CD4-positive, alpha-beta T cell (primary cell): ENCODE measurements at regions of chr7 and their contacts with region 1.

Region 1: DNA sequence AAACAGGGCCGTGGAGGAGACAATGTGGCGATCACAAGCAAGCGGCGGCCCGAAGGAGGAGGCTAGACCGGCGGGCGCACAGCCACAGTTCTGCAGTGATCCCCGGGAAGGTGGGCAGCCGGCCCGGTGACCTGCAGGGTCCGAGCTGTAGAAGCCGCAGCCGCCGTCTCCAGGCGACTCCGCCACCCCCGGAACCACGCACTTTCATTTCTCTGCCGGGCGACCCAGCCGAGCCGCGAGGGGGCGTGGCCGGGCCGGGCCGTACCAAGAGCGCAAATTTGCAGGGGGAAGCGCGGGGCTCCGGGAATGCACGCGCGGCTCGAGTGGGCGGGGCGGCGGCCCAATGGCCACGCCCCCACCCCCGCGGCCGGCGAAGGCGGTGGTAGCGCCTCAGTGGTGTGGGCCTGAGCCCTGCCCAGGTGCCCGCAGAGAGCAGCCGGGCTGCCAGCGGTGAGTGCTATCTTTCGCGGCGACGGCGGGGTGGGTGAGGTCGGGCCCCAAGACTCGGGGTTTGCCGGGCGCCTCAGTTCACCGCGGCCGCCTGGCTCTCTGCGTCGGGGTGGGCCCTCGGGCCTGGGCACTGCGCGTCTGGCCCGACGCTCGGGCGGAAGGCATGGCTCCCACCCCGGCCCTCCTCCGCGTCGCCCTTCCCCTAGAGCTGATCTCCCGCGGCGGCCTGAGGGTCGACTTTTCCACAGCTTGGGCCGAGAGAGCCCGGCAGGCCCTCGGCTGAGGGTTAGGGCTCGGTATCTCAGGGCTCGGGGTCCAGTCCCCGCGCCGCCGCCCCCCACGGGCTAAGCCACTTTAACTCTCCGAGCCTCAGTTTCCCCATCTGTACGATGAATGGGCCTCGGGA is at the start of gene POR:
- DNase-seq: peak; percentile 92 to 99 (median 97)
- ATAC-seq: peak; percentile 94
- H3K4me3 ChIP-seq: peak within 1 kb of the TSS; percentile 99
- H3K4me3 Mint-ChIP-seq: peak within 1 kb of the TSS; percentile 95
- H3K27ac ChIP-seq: peak within 1 kb of the TSS; percentile 90 to 91
- H3K27ac Mint-ChIP-seq: peak within 1 kb of the TSS; percentile 98
- H3K4me1 ChIP-seq: peaks cover 54% of the 10 kb centered on the region
- H3K4me1 Mint-ChIP-seq: peaks cover 48% of the 10 kb centered on the region
- H3K27me3 ChIP-seq: no peaks in the 10 kb centered on the region
- H3K27me3 Mint-ChIP-seq: no peaks in the 10 kb centered on the region
- CTCF ChIP-seq: no peak
- total RNA-seq, gene POR: 44.2 to 54.8 TPM

Region 2: GRCh38 chr7:75878769-75879611 is 36.0 kb before region 1 on chr7 and contains the start of gene RHBDD2:
- CTCF ChIA-PET with region 1: interaction called, 3 read pairs
- POLR2A ChIA-PET with region 1: interaction called, 46 read pairs
- intact Hi-C with region 1: loop called (anchors 1 kb)
- DNase-seq: peak; percentile 95 to 99 (median 97)
- ATAC-seq: peak; percentile 87
- H3K4me3 ChIP-seq: peak within 1 kb of the TSS; percentile 96
- H3K4me3 Mint-ChIP-seq: peak within 1 kb of the TSS; percentile 92
- H3K27ac ChIP-seq: peak within 1 kb of the TSS; percentile 85 to 90
- H3K27ac Mint-ChIP-seq: peak within 1 kb of the TSS; percentile 90
- H3K4me1 ChIP-seq: peaks cover 31% of the 10 kb centered on the region
- H3K4me1 Mint-ChIP-seq: peaks cover 24% of the 10 kb centered on the region
- H3K27me3 ChIP-seq: no peaks in the 10 kb centered on the region
- H3K27me3 Mint-ChIP-seq: no peaks in the 10 kb centered on the region
- CTCF ChIP-seq: no peak
- total RNA-seq, gene RHBDD2: 199 to 208 TPM

Region 3: DNA sequence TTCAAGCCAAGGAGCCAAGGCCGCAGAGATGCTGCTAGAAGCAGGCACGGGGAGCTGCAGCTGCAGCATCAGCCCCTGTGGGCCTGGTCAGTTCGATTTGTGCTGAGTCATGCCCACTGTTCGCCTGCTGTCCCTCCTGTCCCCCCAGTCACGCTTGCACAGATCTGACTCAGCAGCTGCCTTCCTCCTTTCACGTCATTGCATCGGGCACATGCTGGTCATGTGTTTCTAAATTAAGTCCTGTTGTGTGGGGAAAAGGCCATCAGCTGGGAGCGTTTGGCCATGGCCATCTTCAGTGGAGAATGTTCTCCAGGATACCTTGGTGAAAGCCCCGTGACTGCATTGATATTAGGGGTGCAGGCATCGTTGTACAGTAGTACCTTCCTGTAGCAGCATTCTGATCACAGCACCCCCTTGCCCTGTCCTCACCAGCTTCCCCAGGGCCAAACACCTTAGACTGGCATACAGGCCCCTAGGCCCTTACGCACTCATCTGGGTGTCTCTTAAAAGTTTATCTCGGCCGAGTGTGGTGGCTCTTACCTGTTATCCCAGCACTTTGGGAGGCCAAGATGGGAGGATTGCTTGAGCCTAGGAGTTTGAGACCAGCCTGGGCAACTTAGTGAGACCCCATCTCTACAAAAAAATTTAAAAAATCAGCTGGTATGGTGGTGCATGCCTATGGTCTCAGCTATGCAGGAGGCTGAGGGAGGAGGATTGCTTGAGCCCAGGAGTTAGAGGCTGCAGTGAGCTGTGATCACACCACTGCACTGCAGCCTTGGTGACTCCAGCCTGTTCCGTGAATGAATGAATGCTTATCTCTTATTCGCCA is 23.2 kb after region 1 on chr7:
- CTCF ChIA-PET with region 1: no interaction called
- POLR2A ChIA-PET with region 1: no interaction called
- intact Hi-C with region 1: no loop called
- DNase-seq: peak in 2 of 14 experiments; percentile 30 to 39
- ATAC-seq: no peak
- H3K4me3 ChIP-seq: no peak overlapping the region
- H3K4me3 Mint-ChIP-seq: no peak overlapping the region
- H3K27ac ChIP-seq: no peak overlapping the region
- H3K27ac Mint-ChIP-seq: no peak overlapping the region
- H3K4me1 ChIP-seq: no peaks in the 10 kb centered on the region
- H3K4me1 Mint-ChIP-seq: no peaks in the 10 kb centered on the region
- H3K27me3 ChIP-seq: no peaks in the 10 kb centered on the region
- H3K27me3 Mint-ChIP-seq: no peaks in the 10 kb centered on the region
- CTCF ChIP-seq: no peak

Region 4: DNA sequence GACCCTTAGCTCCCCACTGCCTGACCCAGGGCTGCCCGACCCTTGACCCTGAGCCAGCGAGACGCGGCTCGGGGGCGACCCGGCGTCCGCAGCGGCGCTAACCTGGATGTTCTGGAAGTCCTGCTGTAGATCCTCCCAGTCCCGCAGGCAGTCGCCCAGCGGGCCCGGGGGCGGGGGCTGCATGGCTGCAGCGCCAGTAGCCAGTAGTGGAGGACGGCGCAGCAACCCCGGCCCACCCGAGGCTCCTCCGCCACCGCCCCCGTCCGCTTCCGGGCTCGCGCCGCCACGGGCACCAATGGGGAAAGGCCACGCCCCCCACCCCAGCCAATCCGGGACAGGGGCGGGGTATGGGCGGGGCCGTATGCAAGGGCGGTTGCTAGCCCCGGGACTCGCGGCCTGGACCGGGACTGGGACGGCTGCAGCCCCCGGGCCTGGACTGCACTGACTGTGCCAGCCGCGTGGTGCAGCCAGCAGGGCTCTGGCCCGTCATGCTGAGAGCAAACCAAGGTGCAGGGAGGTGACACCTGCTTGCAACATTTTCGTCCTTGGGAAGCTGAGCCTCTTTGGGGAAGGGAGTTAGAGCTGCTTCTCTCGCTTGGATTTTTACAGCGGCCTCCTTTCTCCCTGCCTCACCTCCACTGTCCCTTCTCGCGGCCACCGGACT is 79.6 kb after region 1 on chr7 and contains the start of gene TMEM120A:
- CTCF ChIA-PET with region 1: no interaction called
- POLR2A ChIA-PET with region 1: interaction called, 30 read pairs
- intact Hi-C with region 1: loop called in 1 of 2 experiments (anchors 2 kb)
- DNase-seq: peak; percentile 88 to 98 (median 93)
- ATAC-seq: peak; percentile 98
- H3K4me3 ChIP-seq: peak within 1 kb of the TSS; percentile 94
- H3K4me3 Mint-ChIP-seq: peak within 1 kb of the TSS; percentile 73
- H3K27ac ChIP-seq: peak within 1 kb of the TSS in 1 of 2 donors; percentile 21
- H3K27ac Mint-ChIP-seq: no peak within 1 kb of the TSS
- H3K4me1 ChIP-seq: peaks cover 28% of the 10 kb centered on the region
- H3K4me1 Mint-ChIP-seq: peaks cover 38% of the 10 kb centered on the region
- H3K27me3 ChIP-seq: no peaks in the 10 kb centered on the region
- H3K27me3 Mint-ChIP-seq: no peaks in the 10 kb centered on the region
- CTCF ChIP-seq: peak; percentile 30
- total RNA-seq, gene TMEM120A: 10.0 to 10.8 TPM

Region 5: GRCh38 chr7:76020031-76020714 is 105.2 kb after region 1 on chr7:
- CTCF ChIA-PET with region 1: interaction called, 5 read pairs
- POLR2A ChIA-PET with region 1: interaction called, 10 read pairs
- intact Hi-C with region 1: no loop called
- DNase-seq: peak; percentile 42 to 86 (median 66)
- ATAC-seq: peak; percentile 64
- H3K4me3 ChIP-seq: no peak overlapping the region
- H3K4me3 Mint-ChIP-seq: no peak overlapping the region
- H3K27ac ChIP-seq: no peak overlapping the region
- H3K27ac Mint-ChIP-seq: no peak overlapping the region
- H3K4me1 ChIP-seq: peaks cover 11% of the 10 kb centered on the region
- H3K4me1 Mint-ChIP-seq: peaks cover 6% of the 10 kb centered on the region
- H3K27me3 ChIP-seq: no peaks in the 10 kb centered on the region
- H3K27me3 Mint-ChIP-seq: no peaks in the 10 kb centered on the region
- CTCF ChIP-seq: peak; percentile 88

Region 6: DNA sequence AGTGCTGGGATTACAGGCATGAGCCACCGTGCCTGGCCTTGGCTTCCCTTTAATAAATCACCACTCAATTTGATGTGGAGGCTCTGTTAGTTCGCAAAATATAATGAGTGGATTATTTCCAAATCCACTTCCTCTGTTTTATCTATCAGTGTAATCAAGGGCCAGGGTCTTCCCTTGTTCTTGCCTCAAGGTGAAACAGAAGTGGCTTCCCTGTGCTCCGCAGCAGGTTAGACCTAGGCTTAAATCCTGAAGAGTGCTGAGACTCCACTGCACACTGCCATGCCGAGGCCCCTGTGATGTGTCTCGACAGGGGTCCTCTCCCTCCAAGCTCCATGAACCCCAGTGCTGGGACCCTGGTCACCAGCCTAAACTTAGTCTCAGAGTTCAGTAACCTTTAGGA is 191.9 kb after region 1 on chr7:
- CTCF ChIA-PET with region 1: no interaction called
- POLR2A ChIA-PET with region 1: no interaction called
- intact Hi-C with region 1: no loop called
- DNase-seq: no peak
- ATAC-seq: no peak
- H3K4me3 ChIP-seq: no peak overlapping the region
- H3K4me3 Mint-ChIP-seq: no peak overlapping the region
- H3K27ac ChIP-seq: no peak overlapping the region
- H3K27ac Mint-ChIP-seq: no peak overlapping the region
- H3K4me1 ChIP-seq: no peaks in the 10 kb centered on the region
- H3K4me1 Mint-ChIP-seq: no peaks in the 10 kb centered on the region
- H3K27me3 ChIP-seq: no peaks in the 10 kb centered on the region
- H3K27me3 Mint-ChIP-seq: no peaks in the 10 kb centered on the region
- CTCF ChIP-seq: no peak

Region 7: GRCh38 chr7:76393116-76394031 is 478.4 kb after region 1 on chr7:
- CTCF ChIA-PET with region 1: no interaction called
- POLR2A ChIA-PET with region 1: no interaction called
- intact Hi-C with region 1: loop called in 1 of 2 experiments (anchors 10 kb)
- DNase-seq: peak; percentile 81 to 97 (median 90)
- ATAC-seq: peak; percentile 81
- H3K4me3 ChIP-seq: peak overlapping the region; percentile 60
- H3K4me3 Mint-ChIP-seq: peak overlapping the region; percentile 88
- H3K27ac ChIP-seq: peak overlapping the region; percentile 42 to 46
- H3K27ac Mint-ChIP-seq: peak overlapping the region; percentile 88
- H3K4me1 ChIP-seq: peaks cover 33% of the 10 kb centered on the region
- H3K4me1 Mint-ChIP-seq: peaks cover 22% of the 10 kb centered on the region
- H3K27me3 ChIP-seq: no peaks in the 10 kb centered on the region
- H3K27me3 Mint-ChIP-seq: no peaks in the 10 kb centered on the region
- CTCF ChIP-seq: no peak